BJ (cell line): ENCODE measurements at regions of chr10 and their contacts with region 1.

Region 1: GRCh38 chr10:51063659-51064535 is 10.4 kb upstream of the PRKG1 start:
- DNase-seq: no peak
- H3K4me3 ChIP-seq: no peak overlapping the region
- H3K27me3 ChIP-seq: no peaks in the 10 kb centered on the region
- CTCF ChIP-seq: peak; percentile 52

Region 2: GRCh38 chr10:50837095-50837494 is 226.8 kb before region 1 on chr10:
- CTCF ChIA-PET with region 1: no interaction called
- POLR2A ChIA-PET with region 1: no interaction called
- DNase-seq: no peak
- H3K4me3 ChIP-seq: no peak overlapping the region
- H3K27me3 ChIP-seq: peaks cover 3% of the 10 kb centered on the region; the same call in 1 of the 2 replicates
- CTCF ChIP-seq: no peak

Region 3: GRCh38 chr10:51422311-51423120 is 358.6 kb after region 1 on chr10:
- CTCF ChIA-PET with region 1: interaction called, 30 read pairs
- POLR2A ChIA-PET with region 1: no interaction called
- DNase-seq: no peak
- H3K4me3 ChIP-seq: no peak overlapping the region
- H3K27me3 ChIP-seq: no peaks in the 10 kb centered on the region
- CTCF ChIP-seq: peak; percentile 81

Region 4: DNA sequence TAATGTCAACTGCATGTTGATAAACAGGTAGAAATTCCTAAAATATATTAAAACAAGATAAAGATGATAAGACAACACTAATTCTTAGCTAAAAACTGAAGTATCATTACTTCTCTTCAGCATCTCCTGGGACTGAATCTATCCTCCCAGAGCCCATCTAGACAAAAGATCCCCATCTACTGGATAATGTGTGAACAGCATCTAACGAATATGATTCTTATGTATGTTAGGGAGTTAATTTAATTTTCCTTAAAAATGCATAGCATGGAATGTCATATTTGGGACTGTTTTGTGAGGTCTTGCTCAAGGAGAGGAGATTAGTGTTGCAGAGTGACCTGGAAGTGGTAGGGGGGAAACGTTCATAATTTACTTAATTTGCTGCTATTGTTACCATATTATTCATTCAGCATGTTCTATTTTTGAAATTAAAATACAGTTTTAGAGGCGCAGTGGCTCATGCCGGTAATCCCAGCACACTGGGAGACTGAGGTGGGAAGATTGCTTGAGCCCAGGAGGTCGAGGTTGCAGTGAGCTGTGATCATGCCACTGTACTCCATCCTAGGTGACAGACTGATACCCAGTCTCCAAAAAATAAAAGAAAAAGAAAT is 940.5 kb after region 1 on chr10:
- CTCF ChIA-PET with region 1: interaction called, 19 read pairs
- POLR2A ChIA-PET with region 1: no interaction called
- DNase-seq: no peak
- H3K4me3 ChIP-seq: no peak overlapping the region
- H3K27me3 ChIP-seq: no peaks in the 10 kb centered on the region
- CTCF ChIP-seq: peak; percentile 68

Region 5: GRCh38 chr10:52215745-52216361 is 1152.0 kb after region 1 on chr10:
- CTCF ChIA-PET with region 1: interaction called, 12 read pairs
- POLR2A ChIA-PET with region 1: no interaction called
- DNase-seq: peak; percentile 23
- H3K4me3 ChIP-seq: no peak overlapping the region
- H3K27me3 ChIP-seq: no peaks in the 10 kb centered on the region
- CTCF ChIP-seq: peak; percentile 61